ENCODE measurements at regions of chr10 and their contacts with region 1.

Region 1: GRCh38 chr10:30438021-30438850 is 4.3 kb downstream of the MAP3K8 start:
- DNase-seq: no peak
- H3K4me3 ChIP-seq: no peak overlapping the region
- H3K27ac ChIP-seq: peak overlapping the region in 1 of 2 donors; percentile 96
- H3K4me1 ChIP-seq: no peaks in the 10 kb centered on the region
- H3K27me3 ChIP-seq: no peaks in the 10 kb centered on the region
- CTCF ChIP-seq: no peak
- POLR2A ChIP-seq: no peak

Region 2: DNA sequence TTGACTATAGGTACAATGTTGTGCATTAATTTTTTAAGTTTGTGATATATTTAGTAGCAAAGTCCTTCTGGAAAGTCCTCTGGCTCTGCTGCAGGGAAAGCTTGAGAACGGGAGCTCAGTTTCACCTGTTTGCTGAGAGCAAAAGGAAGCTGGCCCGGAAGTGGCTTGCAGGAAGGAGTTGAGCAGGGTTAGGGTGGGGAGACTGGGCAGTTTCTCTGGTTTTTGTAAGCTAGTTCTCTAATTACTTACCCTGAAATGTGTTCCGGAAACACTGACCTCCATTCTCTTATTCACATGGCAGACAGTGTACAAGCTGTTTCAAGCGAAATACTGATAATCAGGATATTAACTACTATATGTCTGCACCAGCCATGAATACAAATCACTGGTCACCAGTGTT is 18.0 kb after region 1 on chr10:
- intact Hi-C with region 1: loop called (anchors 1 kb)
- DNase-seq: no peak
- H3K4me3 ChIP-seq: no peak overlapping the region
- H3K27ac ChIP-seq: no peak overlapping the region
- H3K4me1 ChIP-seq: no peaks in the 10 kb centered on the region
- H3K27me3 ChIP-seq: no peaks in the 10 kb centered on the region
- CTCF ChIP-seq: no peak
- POLR2A ChIP-seq: no peak

Measured in prostate gland (tissue), 2 donors.